ENCODE measurements at regions of chr12 and their contacts with region 1.

Region 1: DNA sequence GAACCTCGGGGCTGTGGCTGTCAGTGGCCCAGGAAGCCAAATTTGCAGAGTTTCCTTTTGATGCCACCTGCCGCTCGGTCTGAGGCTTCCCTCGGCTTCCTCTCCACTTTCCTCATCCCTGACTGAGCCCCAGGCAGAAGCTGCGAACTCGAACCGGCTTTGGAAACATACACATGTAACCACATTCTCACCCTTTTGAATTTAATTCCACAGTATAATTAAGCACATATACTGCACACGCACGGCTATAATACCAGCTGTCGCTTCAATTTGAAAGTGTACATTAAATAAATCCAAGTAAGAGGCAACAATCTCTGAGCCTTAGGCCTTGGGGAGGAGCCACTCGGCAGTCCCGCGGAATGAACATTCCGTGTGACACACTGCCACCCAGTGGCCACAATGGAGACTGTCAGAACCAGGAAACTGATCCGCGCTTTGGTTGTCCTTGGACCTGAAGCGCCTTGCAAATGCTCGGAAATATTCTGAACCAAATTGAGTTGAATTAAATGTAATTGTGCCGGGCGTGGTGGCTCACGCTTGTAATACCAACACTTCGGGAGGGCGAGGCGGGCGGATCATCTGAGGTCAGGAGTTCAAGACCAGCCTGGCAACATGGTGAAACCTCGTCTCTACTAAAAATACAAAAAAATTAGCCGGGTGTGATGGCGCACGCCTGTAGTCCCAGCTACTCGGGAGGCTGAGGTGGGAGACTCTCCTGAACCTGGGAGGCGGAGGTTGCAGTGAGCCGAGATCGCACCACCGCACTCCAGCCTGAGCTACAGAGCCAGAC is 117.9 kb upstream of the TMPO start:
- DNase-seq: peak; percentile 84
- H3K4me3 ChIP-seq: peak overlapping the region in 2 of 3 experiments; percentile 28 to 35
- H3K27ac ChIP-seq: no peak overlapping the region
- H3K4me1 ChIP-seq: peaks cover 39% of the 10 kb centered on the region
- H3K27me3 ChIP-seq: no peaks in the 10 kb centered on the region
- CTCF ChIP-seq: peak; percentile 76 to 84
- POLR2A ChIP-seq: no peak

Region 2: DNA sequence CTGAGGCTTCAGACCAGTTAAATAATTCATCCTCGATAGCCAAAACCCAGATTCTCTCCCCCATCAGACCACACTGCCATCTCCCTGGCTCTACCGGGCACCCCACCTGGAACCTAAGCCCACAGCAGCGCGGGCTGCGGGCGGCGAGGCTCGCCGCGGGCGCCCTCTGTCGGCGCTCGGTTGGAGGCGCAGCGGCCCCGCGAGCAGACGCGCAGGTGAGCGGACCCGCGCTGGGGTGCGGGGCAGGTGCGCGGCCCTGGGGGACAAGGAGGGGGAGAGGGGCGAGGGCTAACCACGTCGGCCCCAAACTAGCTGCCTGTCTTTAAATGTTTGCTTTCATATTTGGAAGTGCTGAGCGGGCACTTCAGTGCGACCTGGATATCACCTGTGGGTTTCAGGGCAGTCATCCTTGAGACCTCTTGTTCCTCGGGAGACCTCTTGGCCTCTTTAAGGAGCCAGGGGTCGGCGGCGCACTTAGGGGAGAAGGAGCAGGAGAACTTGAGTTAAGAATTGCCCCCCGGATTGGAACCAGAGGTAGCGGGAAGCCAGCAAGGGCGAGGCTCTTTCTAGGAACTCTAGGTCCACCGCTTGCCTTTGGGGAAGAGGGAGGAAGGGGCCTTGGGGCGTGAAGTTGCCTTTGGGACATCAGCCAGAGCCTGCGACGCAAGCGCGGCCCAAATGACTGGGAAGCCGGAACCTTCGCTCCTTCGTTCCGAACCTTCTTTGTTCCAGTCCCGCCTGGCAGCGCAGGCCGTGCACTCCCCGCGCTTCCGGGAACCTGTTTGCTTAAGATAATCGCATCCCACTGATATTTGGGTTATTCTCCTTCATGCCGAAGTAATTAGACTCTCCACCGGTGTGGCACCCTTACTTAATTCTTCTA is 1411.8 kb before region 1 on chr12:
- CTCF ChIA-PET with region 1: interaction called, 21 read pairs
- POLR2A ChIA-PET with region 1: no interaction called
- dilution Hi-C with region 1: no loop called
- intact Hi-C with region 1: loop called (anchors 1 kb)
- DNase-seq: peak; percentile 23
- H3K4me3 ChIP-seq: peak overlapping the region; percentile 5 to 41 (median 39)
- H3K27ac ChIP-seq: no peak overlapping the region
- H3K4me1 ChIP-seq: peaks cover 7% of the 10 kb centered on the region
- H3K27me3 ChIP-seq: peaks cover 14 to 33% of the 10 kb centered on the region in 2 experiments
- CTCF ChIP-seq: peak; percentile 80 to 90
- POLR2A ChIP-seq: no peak

Region 3: DNA sequence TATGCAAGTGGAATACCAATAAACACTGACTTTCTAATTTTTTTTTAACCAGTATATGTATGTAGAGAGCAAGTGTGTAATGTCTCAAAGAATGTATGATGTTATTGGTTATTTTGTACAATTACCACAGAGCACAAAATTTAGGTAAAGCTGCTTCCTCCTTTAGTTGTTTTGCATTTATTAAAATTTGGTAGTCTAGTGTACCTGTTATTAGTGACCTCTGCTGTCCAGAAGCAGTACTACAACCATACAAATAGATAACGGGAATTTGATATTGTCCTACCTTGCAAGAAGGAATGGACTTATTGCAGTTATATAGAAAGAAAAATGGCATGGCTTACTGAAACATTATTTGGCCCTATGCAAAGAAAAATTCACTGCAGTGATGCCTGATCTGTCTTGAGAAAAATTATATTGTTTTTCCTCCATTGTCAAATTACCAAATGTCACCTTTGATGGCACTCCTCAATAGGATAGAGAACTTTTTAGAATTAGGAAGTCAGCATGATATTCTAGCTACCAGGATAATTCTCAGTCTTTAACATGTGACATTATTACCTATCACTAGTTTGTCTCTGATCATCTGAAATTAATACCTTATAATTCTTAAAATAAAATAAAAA is 1088.8 kb before region 1 on chr12:
- CTCF ChIA-PET with region 1: no interaction called
- POLR2A ChIA-PET with region 1: no interaction called
- dilution Hi-C with region 1: no loop called
- intact Hi-C with region 1: loop called (anchors 1 kb)
- DNase-seq: peak; percentile 77
- H3K4me3 ChIP-seq: no peak overlapping the region
- H3K27ac ChIP-seq: no peak overlapping the region
- H3K4me1 ChIP-seq: no peaks in the 10 kb centered on the region
- H3K27me3 ChIP-seq: peaks cover 0 to 1% of the 10 kb centered on the region in 2 experiments
- CTCF ChIP-seq: peak; percentile 37 to 50
- POLR2A ChIP-seq: no peak

Region 4: GRCh38 chr12:97960754-97961608 is 436.5 kb before region 1 on chr12:
- CTCF ChIA-PET with region 1: no interaction called
- POLR2A ChIA-PET with region 1: no interaction called
- dilution Hi-C with region 1: no loop called
- intact Hi-C with region 1: loop called (anchors 5 kb)
- DNase-seq: peak; percentile 20
- H3K4me3 ChIP-seq: no peak overlapping the region
- H3K27ac ChIP-seq: no peak overlapping the region
- H3K4me1 ChIP-seq: no peaks in the 10 kb centered on the region
- H3K27me3 ChIP-seq: no peaks in the 10 kb centered on the region
- CTCF ChIP-seq: peak; percentile 63 to 73
- POLR2A ChIP-seq: no peak

Region 5: GRCh38 chr12:98424726-98425401 is 27.4 kb after region 1 on chr12:
- CTCF ChIA-PET with region 1: interaction called, 7 read pairs
- POLR2A ChIA-PET with region 1: no interaction called
- dilution Hi-C with region 1: no loop called
- intact Hi-C with region 1: loop called (anchors 1 kb)
- DNase-seq: peak; percentile 94
- H3K4me3 ChIP-seq: peak overlapping the region in 1 of 3 experiments; percentile 14
- H3K27ac ChIP-seq: peak overlapping the region; percentile 54
- H3K4me1 ChIP-seq: peaks cover 15% of the 10 kb centered on the region
- H3K27me3 ChIP-seq: no peaks in the 10 kb centered on the region
- CTCF ChIP-seq: peak; percentile 65 to 68
- POLR2A ChIP-seq: no peak

Region 6: GRCh38 chr12:98503592-98504367 is 106.3 kb after region 1 on chr12:
- CTCF ChIA-PET with region 1: no interaction called
- POLR2A ChIA-PET with region 1: no interaction called
- dilution Hi-C with region 1: no loop called
- intact Hi-C with region 1: loop called (anchors 1 kb)
- DNase-seq: peak; percentile 95
- H3K4me3 ChIP-seq: peak overlapping the region in 2 of 3 experiments; percentile 50 to 83
- H3K27ac ChIP-seq: peak overlapping the region; percentile 93
- H3K4me1 ChIP-seq: peaks cover 2% of the 10 kb centered on the region
- H3K27me3 ChIP-seq: no peaks in the 10 kb centered on the region
- CTCF ChIP-seq: no peak
- POLR2A ChIP-seq: peak; percentile 45